WTC11 (cell line): ENCODE measurements at regions of chr6 and their contacts with region 1.

Region 1: DNA sequence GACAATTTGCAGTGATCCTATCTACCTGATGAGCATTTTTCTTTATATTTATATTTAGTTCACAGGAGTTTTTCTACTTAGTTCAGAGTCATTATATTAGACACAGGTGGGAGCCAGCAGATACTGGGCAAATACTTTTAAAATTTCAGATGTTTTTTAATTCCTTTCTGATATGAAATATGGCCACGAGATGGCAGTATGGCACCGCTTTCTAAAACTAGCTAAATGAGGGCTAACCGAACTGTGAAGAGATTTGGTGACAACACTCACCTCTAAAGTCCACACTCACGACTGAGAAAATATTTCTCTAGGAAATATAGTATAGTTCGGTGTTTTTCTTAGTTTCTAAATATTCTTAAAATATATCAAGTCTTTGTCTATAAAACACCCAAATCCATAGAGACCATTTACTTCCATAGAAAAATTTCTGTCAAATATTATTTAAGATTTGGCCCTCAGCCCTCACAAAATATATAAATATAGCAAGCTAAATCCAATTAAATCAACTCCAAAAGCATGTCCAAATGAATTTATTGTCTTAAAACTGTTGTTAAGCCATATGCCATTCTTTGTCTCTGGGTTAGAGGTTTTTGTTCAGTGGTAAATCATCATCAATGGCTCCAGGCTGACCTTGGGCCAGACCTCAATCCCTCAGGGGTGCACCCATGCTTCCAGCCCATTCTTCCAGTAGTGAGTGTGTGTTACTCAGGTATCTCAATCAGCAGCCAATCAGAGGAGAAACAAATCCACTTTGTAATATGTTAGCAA is 63.6 kb downstream of the HUS1B start:
- DNase-seq: peak; percentile 33
- ATAC-seq: peak; percentile 68
- H3K4me3 Mint-ChIP-seq: no peak overlapping the region
- H3K27ac Mint-ChIP-seq: peak overlapping the region; percentile 45
- H3K4me1 Mint-ChIP-seq: peaks cover 21% of the 10 kb centered on the region
- H3K27me3 Mint-ChIP-seq: no peaks in the 10 kb centered on the region
- CTCF ChIP-seq: peak; percentile 52

Region 2: DNA sequence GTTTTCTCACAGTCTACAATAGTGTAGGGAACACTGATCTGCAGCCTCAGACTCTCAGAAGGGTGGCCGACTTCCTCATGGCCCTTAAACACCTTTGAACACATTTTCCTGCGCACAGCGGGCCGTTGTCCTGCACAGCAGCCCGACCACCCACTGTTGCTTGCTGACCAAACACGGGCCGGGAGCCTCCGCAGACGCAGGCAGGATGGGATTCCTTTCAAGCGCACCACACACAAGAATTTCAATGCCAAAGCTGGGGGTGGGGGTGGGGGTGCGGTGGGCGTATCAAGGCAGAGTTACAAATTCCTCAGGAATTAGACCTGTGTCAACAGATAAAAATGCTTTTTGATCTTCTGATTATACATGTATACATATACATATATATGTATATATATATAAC is 11.0 kb before region 1 on chr6:
- CTCF ChIA-PET with region 1: interaction called, 19 read pairs
- POLR2A ChIA-PET with region 1: no interaction called
- DNase-seq: peak; percentile 75
- ATAC-seq: peak; percentile 90
- H3K4me3 Mint-ChIP-seq: peak overlapping the region; percentile 55
- H3K27ac Mint-ChIP-seq: peak overlapping the region; percentile 71
- H3K4me1 Mint-ChIP-seq: peaks cover 42% of the 10 kb centered on the region
- H3K27me3 Mint-ChIP-seq: no peaks in the 10 kb centered on the region
- CTCF ChIP-seq: no peak

Region 3: DNA sequence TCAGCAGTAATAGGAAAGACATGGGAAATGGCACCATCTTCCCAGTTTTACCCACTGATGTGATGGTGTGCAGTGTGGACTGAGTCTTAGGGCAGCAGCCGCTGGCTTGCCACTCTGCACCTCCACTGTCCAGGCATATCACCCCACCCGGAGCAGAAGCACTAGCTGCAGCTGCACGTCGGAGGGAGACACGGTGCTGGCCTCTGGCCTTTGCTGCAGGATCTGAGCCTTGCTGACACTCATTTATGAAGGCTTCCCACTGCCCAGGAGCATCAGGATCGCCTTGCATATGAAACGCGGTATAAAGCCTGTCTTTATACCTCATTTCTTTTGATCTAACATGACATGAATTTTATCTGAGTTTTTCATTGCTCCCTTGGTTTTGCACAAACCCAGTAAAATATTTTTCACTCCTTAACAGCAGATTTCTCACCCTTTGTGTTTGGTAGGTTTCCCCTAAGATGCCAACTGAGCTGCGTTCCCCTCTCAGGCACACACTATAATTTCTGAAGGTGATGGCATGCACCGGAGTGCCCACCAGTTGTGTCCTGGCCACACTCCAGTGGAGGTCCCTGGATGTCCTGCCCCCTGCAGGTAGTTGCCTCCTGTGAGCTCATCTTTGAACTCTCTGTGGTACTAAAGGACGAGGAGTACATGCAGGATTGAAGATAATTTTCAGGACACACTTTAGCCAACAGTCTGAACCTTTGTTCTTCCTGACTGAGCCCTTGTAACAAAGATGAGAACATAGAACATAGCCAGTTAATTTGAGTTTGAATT is 108.6 kb after region 1 on chr6:
- CTCF ChIA-PET with region 1: interaction called, 27 read pairs
- POLR2A ChIA-PET with region 1: no interaction called
- DNase-seq: peak; percentile 30
- ATAC-seq: peak; percentile 73
- H3K4me3 Mint-ChIP-seq: no peak overlapping the region
- H3K27ac Mint-ChIP-seq: peak overlapping the region; percentile 73; the same call in 1 of the 2 replicates
- H3K4me1 Mint-ChIP-seq: peaks cover 41% of the 10 kb centered on the region
- H3K27me3 Mint-ChIP-seq: no peaks in the 10 kb centered on the region
- CTCF ChIP-seq: no peak